WTC11 (cell line): ENCODE measurements at regions of chr12 and their contacts with region 1.

Region 1: DNA sequence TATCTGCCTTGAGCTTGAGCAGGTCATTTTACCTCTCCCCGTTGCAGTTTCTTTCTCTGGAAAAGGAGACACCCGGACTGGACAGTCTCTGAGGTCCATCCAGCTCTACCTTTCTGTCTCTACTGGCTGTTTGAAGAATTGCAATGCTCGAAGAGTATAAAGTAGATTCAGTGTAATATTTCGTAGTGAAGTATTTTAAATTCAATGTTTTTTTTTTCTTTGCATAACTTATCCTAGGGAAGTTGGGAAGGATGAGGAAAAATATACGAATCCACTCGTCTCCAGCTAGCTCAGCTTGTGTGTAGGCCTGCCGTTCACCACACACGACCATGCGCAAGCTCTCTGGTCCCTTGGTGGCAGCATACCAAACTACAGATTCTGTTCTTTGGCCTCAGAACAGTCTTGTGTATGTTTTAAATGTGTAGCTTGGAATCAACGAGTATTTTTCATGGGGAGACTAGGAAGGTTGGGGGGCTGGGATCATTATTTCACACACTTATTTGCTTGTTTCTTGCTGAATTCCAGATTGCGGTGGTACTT is 307.9 kb downstream of the CACNA1C start:
- DNase-seq: no peak
- ATAC-seq: no peak; the same call in 1 of the 2 replicates
- H3K4me3 Mint-ChIP-seq: no peak overlapping the region
- H3K27ac Mint-ChIP-seq: no peak overlapping the region
- H3K4me1 Mint-ChIP-seq: peaks cover 22% of the 10 kb centered on the region
- H3K27me3 Mint-ChIP-seq: no peaks in the 10 kb centered on the region
- CTCF ChIP-seq: peak; percentile 19; the same call in 1 of the 2 replicates

Region 2: GRCh38 chr12:2583091-2583497 is 222.4 kb after region 1 on chr12:
- CTCF ChIA-PET with region 1: interaction called, 32 read pairs
- POLR2A ChIA-PET with region 1: no interaction called
- DNase-seq: peak; percentile 79
- ATAC-seq: peak; percentile 89
- H3K4me3 Mint-ChIP-seq: no peak overlapping the region
- H3K27ac Mint-ChIP-seq: no peak overlapping the region
- H3K4me1 Mint-ChIP-seq: peaks cover 20% of the 10 kb centered on the region
- H3K27me3 Mint-ChIP-seq: peaks cover 33% of the 10 kb centered on the region
- CTCF ChIP-seq: peak; percentile 91

Region 3: DNA sequence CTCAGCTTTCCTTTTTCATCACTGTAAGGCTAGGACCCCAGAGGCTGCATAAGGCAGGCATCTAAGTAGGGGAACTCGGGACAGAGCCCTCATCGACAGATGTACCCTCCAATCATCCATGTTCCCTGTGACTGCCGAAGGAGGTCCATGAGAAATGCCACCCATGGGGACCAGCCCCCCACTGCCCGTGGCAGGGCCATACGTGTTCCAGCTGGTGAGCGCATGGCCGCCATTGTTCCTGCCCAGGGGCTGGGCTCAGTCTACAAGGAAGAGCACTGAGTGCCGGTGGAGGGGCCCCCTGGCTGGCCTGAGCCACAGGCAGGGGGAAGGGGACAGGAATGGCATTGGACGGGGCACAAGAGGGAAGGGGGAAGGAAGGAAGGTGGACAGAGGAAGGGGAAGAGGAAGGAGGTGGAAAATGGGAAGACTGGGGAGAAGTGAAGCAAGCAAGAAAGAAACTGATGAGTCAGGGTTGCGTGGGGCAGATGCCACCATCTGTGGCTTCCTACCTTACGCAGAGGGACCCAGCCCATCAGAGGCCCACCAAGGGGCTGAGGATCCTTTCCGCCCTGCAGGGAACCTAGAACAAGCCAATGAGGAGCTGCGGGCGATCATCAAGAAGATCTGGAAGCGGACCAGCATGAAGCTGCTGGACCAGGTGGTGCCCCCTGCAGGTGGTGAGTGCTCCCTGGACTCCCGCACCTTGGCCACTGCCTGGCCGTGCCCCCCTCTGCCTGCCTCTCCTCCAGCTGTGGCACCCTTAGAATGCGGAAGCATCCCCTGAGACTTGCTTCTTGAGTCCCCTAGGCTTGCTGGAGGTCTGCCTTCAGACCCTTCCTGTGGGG is 313.5 kb after region 1 on chr12:
- CTCF ChIA-PET with region 1: no interaction called
- POLR2A ChIA-PET with region 1: no interaction called
- DNase-seq: peak; percentile 61
- ATAC-seq: peak; percentile 75
- H3K4me3 Mint-ChIP-seq: no peak overlapping the region
- H3K27ac Mint-ChIP-seq: no peak overlapping the region
- H3K4me1 Mint-ChIP-seq: no peaks in the 10 kb centered on the region; the same call in 1 of the 2 replicates
- H3K27me3 Mint-ChIP-seq: no peaks in the 10 kb centered on the region
- CTCF ChIP-seq: peak; percentile 38; the same call in 1 of the 2 replicates